Activated CD4-positive, alpha-beta memory T cell treated with anti-CD3 and anti-CD28 coated beads for 36 hours (primary cell): ENCODE measurements at regions of chr1 and their contacts with region 1.

Region 1: GRCh38 chr1:93179886-93180722 is at the start of gene TMED5:
- DNase-seq: peak; percentile 98
- H3K4me3 Mint-ChIP-seq: peak within 1 kb of the TSS; percentile 88
- H3K27ac Mint-ChIP-seq: peak within 1 kb of the TSS; percentile 97
- H3K4me1 Mint-ChIP-seq: peaks cover 57% of the 10 kb centered on the region
- H3K27me3 Mint-ChIP-seq: no peaks in the 10 kb centered on the region
- total RNA-seq, gene TMED5: 47.0 to 49.2 TPM

Region 2: GRCh38 chr1:92653617-92654381 is 526.3 kb before region 1 on chr1:
- CTCF ChIA-PET with region 1: no interaction called
- POLR2A ChIA-PET with region 1: no interaction called
- intact Hi-C with region 1: no loop called
- DNase-seq: no peak
- H3K4me3 Mint-ChIP-seq: no peak overlapping the region
- H3K27ac Mint-ChIP-seq: no peak overlapping the region
- H3K4me1 Mint-ChIP-seq: no peaks in the 10 kb centered on the region
- H3K27me3 Mint-ChIP-seq: peaks cover 11% of the 10 kb centered on the region

Region 3: DNA sequence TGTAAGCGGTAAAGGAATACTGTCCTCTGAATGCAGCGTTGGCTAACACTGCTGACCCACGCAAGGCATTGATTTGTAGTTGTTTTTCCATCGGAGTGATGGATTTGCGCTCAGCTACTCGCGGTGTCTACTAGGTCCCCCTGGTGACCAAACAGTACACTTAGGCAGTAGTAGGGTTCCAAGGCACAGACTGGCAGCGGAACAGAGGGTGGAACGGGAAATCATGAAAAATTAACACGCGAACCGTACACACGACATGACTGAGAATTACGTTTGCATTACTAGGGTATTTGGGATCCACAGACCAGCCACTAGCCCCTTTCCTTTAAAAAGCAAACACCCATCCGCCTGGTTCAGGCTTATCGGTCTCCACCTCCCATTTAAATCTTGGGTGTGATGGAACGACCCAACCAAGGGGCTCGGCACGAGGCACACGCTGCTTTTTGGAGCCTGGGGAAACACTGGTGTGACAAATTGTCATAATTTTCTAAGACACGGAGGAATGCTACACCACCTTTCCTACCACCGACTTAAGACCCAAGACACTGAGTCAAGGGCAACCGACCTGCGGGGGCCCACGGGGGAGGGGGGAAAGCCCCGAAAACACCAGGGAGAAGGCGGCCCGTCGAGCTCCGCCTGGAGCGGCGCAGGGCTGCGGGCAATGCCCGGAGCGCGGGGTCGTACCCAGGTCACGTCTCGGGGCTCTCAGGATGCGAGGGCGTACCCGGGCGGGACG is 219.5 kb before region 1 on chr1:
- CTCF ChIA-PET with region 1: no interaction called
- POLR2A ChIA-PET with region 1: no interaction called
- intact Hi-C with region 1: loop called (anchors 2 kb)
- DNase-seq: peak; percentile 75
- H3K4me3 Mint-ChIP-seq: peak overlapping the region; percentile 88
- H3K27ac Mint-ChIP-seq: peak overlapping the region; percentile 96
- H3K4me1 Mint-ChIP-seq: peaks cover 39% of the 10 kb centered on the region
- H3K27me3 Mint-ChIP-seq: no peaks in the 10 kb centered on the region

Region 4: GRCh38 chr1:93021539-93022134 is 158.5 kb before region 1 on chr1:
- CTCF ChIA-PET with region 1: interaction called, 4 read pairs
- POLR2A ChIA-PET with region 1: no interaction called
- intact Hi-C with region 1: loop called (anchors 5 kb)
- DNase-seq: no peak
- H3K4me3 Mint-ChIP-seq: no peak overlapping the region
- H3K27ac Mint-ChIP-seq: no peak overlapping the region
- H3K4me1 Mint-ChIP-seq: no peaks in the 10 kb centered on the region
- H3K27me3 Mint-ChIP-seq: peaks cover 6% of the 10 kb centered on the region

Region 5: DNA sequence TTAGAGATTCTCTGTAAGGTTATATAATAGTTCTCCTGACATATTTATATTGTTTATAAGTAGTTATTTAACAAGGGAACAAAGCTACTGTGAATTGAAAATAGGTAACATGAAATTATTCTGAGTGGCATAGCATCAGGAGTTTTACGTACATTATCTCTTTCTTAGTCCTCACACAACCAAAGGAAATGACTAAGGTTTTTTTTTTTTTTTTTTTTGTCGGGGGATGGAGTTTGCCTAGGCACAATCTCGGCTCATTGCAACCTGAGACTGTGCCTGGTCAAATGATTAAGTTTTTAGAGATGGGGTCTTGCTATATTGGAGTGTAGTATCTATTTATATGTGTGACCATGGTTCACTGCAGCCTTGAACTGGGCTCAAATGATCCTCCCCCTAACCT is 24.8 kb before region 1 on chr1:
- CTCF ChIA-PET with region 1: no interaction called
- POLR2A ChIA-PET with region 1: no interaction called
- intact Hi-C with region 1: loop called (anchors 2 kb)
- DNase-seq: no peak
- H3K4me3 Mint-ChIP-seq: no peak overlapping the region
- H3K27ac Mint-ChIP-seq: peak overlapping the region; percentile 40
- H3K4me1 Mint-ChIP-seq: peaks cover 23% of the 10 kb centered on the region
- H3K27me3 Mint-ChIP-seq: no peaks in the 10 kb centered on the region

Region 6: GRCh38 chr1:93345633-93346420 is 165.7 kb after region 1 on chr1 and contains the start of gene DR1:
- CTCF ChIA-PET with region 1: no interaction called
- POLR2A ChIA-PET with region 1: interaction called, 5 read pairs
- intact Hi-C with region 1: loop called (anchors 1 kb)
- DNase-seq: peak; percentile 95
- H3K4me3 Mint-ChIP-seq: peak within 1 kb of the TSS; percentile 94
- H3K27ac Mint-ChIP-seq: peak within 1 kb of the TSS; percentile 98
- H3K4me1 Mint-ChIP-seq: peaks cover 22% of the 10 kb centered on the region
- H3K27me3 Mint-ChIP-seq: no peaks in the 10 kb centered on the region
- total RNA-seq, gene DR1: 74.9 to 77.4 TPM

Region 7: DNA sequence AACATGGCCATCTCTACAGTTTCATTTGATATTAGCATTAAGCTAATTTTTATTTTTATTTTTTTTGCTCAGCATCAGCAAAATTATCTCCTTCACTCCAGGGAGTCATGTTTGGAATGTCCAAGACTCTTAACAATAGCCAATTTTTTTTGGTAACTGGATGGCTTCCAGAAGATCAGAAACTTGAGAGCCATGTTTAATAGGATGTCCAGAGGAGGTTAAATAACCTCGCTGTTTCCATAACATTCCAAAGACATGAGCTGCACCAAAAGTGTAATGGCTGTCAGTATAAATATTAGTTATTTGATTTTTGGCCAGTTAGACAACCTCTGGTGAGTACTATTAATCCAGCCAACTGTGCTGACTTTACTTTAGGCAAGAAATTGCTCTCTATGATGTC is 618.2 kb after region 1 on chr1:
- CTCF ChIA-PET with region 1: no interaction called
- POLR2A ChIA-PET with region 1: no interaction called
- intact Hi-C with region 1: no loop called
- DNase-seq: no peak
- H3K4me3 Mint-ChIP-seq: no peak overlapping the region
- H3K27ac Mint-ChIP-seq: no peak overlapping the region
- H3K4me1 Mint-ChIP-seq: no peaks in the 10 kb centered on the region
- H3K27me3 Mint-ChIP-seq: peaks cover 2% of the 10 kb centered on the region

Region 8: GRCh38 chr1:93878889-93879586 is 698.9 kb after region 1 on chr1 and contains the start of gene DNTTIP2:
- CTCF ChIA-PET with region 1: no interaction called
- POLR2A ChIA-PET with region 1: no interaction called
- intact Hi-C with region 1: loop called (anchors 10 kb)
- DNase-seq: peak; percentile 94
- H3K4me3 Mint-ChIP-seq: peak within 1 kb of the TSS; percentile 94
- H3K27ac Mint-ChIP-seq: peak within 1 kb of the TSS; percentile 98
- H3K4me1 Mint-ChIP-seq: peaks cover 42% of the 10 kb centered on the region
- H3K27me3 Mint-ChIP-seq: no peaks in the 10 kb centered on the region
- total RNA-seq, gene DNTTIP2: 84.4 to 91.1 TPM